ENCODE measurements at regions of chr1 and their contacts with region 1.

Region 1: DNA sequence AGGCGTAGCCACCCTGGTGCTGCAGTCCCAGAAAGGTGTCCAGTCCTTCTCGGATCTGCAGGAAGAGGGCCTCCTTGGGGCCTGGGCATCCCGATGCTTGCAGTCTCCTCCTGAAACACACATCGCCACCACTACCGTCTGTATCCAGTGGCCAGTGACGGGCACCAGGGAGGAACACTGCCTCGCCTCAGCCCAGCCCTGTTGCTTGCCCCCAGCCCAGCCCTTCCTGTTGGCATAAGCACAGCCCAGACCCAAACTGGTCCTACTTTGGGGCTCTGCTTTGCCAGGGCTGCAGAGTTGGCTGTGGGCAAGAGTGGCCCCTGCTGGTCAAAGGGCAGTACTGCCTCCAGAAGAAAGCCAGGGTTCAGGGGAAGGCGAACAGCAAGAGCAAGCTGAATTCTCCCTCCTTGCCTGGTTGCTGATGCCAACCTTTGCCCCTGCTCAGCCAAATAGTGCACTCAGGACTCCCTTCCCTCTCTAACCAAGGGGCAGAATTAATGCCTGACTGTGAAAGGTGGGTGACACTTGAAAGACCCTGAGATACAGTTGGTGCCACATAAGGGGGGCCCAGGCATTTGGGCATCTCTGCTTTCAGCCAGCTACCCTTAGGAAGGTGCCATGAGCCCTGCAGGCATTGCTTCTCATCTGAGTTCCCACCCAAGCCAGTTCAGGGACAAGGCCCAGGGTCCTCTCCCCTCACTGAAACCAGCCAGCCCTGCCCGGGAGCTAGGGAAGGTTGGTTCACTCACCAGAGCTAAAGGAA is 11.1 kb upstream of the ARHGEF2 start:
- DNase-seq: peak; percentile 64 to 89 (median 78)
- ATAC-seq: peak; percentile 100
- H3K4me3 ChIP-seq: no peak overlapping the region
- H3K4me3 Mint-ChIP-seq: no peak overlapping the region
- H3K27ac ChIP-seq: no peak overlapping the region
- H3K27ac Mint-ChIP-seq: no peak overlapping the region
- H3K4me1 ChIP-seq: peaks cover 7% of the 10 kb centered on the region
- H3K4me1 Mint-ChIP-seq: peaks cover 9% of the 10 kb centered on the region
- H3K27me3 ChIP-seq: no peaks in the 10 kb centered on the region
- H3K27me3 Mint-ChIP-seq: no peaks in the 10 kb centered on the region
- CTCF ChIP-seq: peak; percentile 97

Region 2: GRCh38 chr1:155911156-155912055 is 78.0 kb before region 1 on chr1 and contains the start of gene RIT1:
- CTCF ChIA-PET with region 1: interaction called, 5 read pairs
- POLR2A ChIA-PET with region 1: no interaction called
- intact Hi-C with region 1: loop called in 1 of 2 experiments (anchors 1 kb)
- DNase-seq: peak; percentile 62 to 93 (median 85)
- ATAC-seq: peak; percentile 97
- H3K4me3 ChIP-seq: peak within 1 kb of the TSS; percentile 68 to 72
- H3K4me3 Mint-ChIP-seq: peak within 1 kb of the TSS; percentile 97
- H3K27ac ChIP-seq: peak within 1 kb of the TSS; percentile 71 to 73
- H3K27ac Mint-ChIP-seq: peak within 1 kb of the TSS; percentile 98
- H3K4me1 ChIP-seq: peaks cover 21% of the 10 kb centered on the region
- H3K4me1 Mint-ChIP-seq: peaks cover 27% of the 10 kb centered on the region
- H3K27me3 ChIP-seq: no peaks in the 10 kb centered on the region
- H3K27me3 Mint-ChIP-seq: no peaks in the 10 kb centered on the region
- CTCF ChIP-seq: no peak
- total RNA-seq, gene RIT1: 79.6 to 85.0 TPM

Region 3: DNA sequence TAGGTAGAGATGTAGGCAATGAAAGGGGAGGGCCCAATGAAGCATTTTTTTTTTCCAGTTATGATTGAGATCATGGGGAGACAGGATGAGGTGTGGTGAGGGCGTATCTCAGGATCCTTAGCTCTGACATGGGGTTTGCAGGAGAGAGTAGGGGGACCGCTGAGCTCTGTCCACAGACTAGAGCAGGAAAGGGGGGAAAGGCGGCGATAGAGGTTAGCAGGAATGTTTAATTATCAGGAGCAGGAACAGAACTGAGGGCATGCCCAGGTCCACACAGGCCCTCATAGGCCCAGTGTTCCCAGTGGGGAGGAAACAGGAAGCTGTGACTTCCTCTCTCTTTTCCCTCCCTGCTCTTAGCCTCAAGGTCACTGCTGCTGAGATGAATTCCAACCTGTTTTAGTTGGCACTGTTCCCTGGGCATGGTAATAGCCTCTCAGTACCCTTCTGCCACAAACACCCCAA is 48.9 kb before region 1 on chr1:
- CTCF ChIA-PET with region 1: interaction called, 74 read pairs
- POLR2A ChIA-PET with region 1: interaction called, 11 read pairs
- intact Hi-C with region 1: loop called (anchors 1 kb)
- DNase-seq: no peak
- ATAC-seq: no peak
- H3K4me3 ChIP-seq: no peak overlapping the region
- H3K4me3 Mint-ChIP-seq: no peak overlapping the region
- H3K27ac ChIP-seq: no peak overlapping the region
- H3K27ac Mint-ChIP-seq: peak overlapping the region; percentile 66
- H3K4me1 ChIP-seq: peaks cover 32% of the 10 kb centered on the region
- H3K4me1 Mint-ChIP-seq: peaks cover 46% of the 10 kb centered on the region
- H3K27me3 ChIP-seq: no peaks in the 10 kb centered on the region
- H3K27me3 Mint-ChIP-seq: no peaks in the 10 kb centered on the region
- CTCF ChIP-seq: no peak

Region 4: GRCh38 chr1:155957411-155957915 is 32.0 kb before region 1 on chr1:
- CTCF ChIA-PET with region 1: interaction called, 13 read pairs
- POLR2A ChIA-PET with region 1: interaction called, 3 read pairs
- intact Hi-C with region 1: no loop called
- DNase-seq: no peak
- ATAC-seq: no peak
- H3K4me3 ChIP-seq: no peak overlapping the region
- H3K4me3 Mint-ChIP-seq: no peak overlapping the region
- H3K27ac ChIP-seq: no peak overlapping the region
- H3K27ac Mint-ChIP-seq: no peak overlapping the region
- H3K4me1 ChIP-seq: peaks cover under 1% of the 10 kb centered on the region
- H3K4me1 Mint-ChIP-seq: peaks cover 3% of the 10 kb centered on the region
- H3K27me3 ChIP-seq: no peaks in the 10 kb centered on the region
- H3K27me3 Mint-ChIP-seq: no peaks in the 10 kb centered on the region
- CTCF ChIP-seq: no peak

Region 5: DNA sequence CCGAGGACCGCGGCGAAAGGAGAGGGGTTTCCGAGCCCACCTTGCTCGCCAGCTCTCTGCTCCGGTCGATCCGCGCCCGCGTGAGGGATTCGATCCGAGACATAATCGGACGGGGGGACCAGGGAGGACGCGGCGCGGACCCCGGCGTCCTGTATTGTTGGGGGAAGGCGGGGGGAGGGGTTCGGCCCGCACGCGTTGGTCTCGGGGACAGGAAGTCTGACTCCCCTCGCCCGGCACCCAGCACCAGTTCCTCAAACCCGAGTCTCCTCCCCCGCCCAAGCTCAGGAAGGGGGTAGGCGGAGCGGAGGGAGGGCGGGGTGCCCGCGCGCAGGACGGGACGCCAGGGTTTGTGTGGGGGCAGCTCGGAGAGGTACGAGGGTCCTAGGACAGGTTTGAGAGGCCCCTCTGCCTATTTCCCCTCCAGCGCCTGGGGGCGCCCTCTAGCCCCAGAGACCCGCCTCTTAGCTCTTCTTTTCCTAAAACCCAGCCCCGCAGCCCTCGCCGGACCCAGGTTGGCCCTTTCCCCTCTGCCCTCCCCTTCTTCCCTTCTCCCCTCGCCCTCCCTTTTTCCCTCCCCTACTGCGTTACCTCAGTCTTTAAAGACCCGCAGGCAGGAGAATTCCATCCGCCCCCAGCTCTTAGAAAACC is 11.0 kb before region 1 on chr1 and contains the start of gene ARHGEF2:
- CTCF ChIA-PET with region 1: interaction called, 57 read pairs
- POLR2A ChIA-PET with region 1: interaction called, 8 read pairs
- intact Hi-C with region 1: loop called (anchors 1 kb)
- DNase-seq: peak; percentile 46 to 88 (median 79)
- ATAC-seq: peak; percentile 66
- H3K4me3 ChIP-seq: peak within 1 kb of the TSS; percentile 70 to 100
- H3K4me3 Mint-ChIP-seq: peak within 1 kb of the TSS; percentile 97
- H3K27ac ChIP-seq: peak within 1 kb of the TSS; percentile 59 to 91
- H3K27ac Mint-ChIP-seq: peak within 1 kb of the TSS; percentile 94
- H3K4me1 ChIP-seq: peaks cover 72% of the 10 kb centered on the region
- H3K4me1 Mint-ChIP-seq: peaks cover 69% of the 10 kb centered on the region
- H3K27me3 ChIP-seq: no peaks in the 10 kb centered on the region
- H3K27me3 Mint-ChIP-seq: no peaks in the 10 kb centered on the region
- CTCF ChIP-seq: no peak
- total RNA-seq, gene ARHGEF2: 51.6 to 52.3 TPM